ENCODE measurements at regions of chr14 and their contacts with region 1.

Region 1: DNA sequence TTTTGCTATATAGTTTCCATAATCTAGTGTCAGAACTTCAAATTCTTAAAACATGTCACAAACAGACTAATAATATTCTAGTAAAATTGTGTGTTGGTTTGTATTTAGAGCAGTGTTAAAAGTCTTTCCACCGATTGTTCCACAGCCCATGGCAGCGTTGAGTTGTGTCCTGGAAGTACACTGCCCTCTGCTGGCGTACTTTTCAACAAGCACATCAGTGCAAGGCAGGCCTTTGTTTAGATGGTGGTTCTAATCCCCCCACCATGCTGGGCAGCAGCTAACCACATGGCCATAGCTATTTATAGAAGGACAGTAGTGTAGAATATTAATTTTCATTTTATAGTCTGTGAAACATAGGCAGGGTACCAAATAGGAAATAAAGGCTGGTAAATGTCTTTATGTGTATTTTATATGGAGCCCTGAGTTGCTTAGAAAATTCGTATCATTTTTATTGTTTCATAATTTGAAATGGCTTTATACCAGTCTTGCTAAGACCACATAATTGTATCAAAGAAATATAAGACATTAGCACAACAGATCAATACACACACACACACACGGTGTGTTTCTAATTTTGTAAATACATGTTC is 235.4 kb downstream of the SEC23A start:
- DNase-seq: peak; percentile 10
- H3K4me3 Mint-ChIP-seq: no peak overlapping the region
- H3K27ac Mint-ChIP-seq: no peak overlapping the region
- H3K4me1 Mint-ChIP-seq: no peaks in the 10 kb centered on the region
- H3K27me3 Mint-ChIP-seq: peaks cover 3% of the 10 kb centered on the region

Region 2: DNA sequence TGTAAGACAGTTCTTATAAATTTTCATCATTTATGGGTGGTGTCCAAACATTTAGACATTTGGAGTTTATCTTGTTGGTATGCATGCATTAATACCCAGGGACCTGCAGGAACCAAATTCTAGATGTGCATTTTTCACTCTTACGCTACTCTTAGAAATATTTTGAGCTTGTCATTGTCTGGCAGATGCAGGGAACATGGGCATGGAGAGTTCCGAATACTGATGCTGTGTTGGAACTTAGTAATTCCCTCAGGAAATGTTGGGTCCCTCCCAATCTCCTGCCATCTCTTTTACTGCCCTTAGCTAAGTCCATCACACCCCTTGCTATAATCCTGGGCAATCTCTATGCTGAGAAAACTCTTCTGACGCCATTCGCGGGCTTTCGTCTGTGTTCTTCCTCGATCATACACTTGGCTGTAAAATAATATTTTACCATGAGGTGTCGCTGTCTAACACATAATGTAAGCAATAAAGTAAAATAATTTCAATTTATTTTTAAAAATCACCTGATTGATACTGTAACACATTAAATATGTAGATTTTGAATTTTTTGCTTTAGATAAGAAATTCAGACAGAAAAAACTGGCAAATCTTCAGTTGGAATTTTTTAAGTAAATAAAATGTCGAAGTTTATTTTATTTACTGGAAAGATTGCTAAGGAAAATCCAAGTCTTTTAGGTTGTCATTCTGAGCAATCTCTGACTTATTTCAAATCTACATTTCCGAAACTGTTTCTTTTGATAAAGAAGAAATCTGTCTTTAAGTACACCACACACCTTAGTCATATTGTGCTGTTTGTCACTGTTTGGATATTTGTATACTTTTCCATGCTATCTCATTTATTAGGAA is 964.1 kb before region 1 on chr14:
- intact Hi-C with region 1: loop called (anchors 2 kb)
- DNase-seq: no peak
- H3K4me3 Mint-ChIP-seq: no peak overlapping the region
- H3K27ac Mint-ChIP-seq: no peak overlapping the region
- H3K4me1 Mint-ChIP-seq: no peaks in the 10 kb centered on the region
- H3K27me3 Mint-ChIP-seq: peaks cover 9% of the 10 kb centered on the region

Region 3: DNA sequence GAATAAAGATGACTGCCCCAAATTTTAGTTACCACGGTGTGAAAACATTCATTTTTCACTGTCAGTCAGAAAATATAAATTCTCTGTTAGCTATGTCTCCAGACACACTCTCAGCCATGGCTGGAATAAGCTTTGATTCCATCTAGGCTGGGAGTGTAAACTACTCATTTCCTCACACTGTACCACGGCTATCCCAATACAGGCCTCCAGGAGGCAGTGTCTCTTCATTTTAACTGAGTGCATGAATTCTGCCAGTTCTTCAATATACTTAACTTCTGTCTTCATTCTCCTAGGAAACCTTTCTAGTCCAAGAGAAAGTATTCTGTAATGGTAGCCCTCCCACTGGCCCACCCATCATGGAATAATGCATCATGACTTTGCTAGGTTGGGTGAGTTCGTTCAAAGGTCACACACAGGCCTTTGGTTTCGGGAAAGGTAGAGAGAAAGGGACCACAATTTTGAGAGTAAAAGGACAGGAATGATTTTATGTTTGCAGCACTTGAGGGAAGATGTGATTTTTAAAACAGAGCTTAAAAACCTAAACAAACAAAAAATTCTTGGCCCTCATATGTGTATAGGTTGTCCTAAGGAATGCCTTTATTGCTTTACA is 145.7 kb before region 1 on chr14:
- intact Hi-C with region 1: loop called (anchors 1 kb)
- DNase-seq: peak; percentile 4
- H3K4me3 Mint-ChIP-seq: no peak overlapping the region
- H3K27ac Mint-ChIP-seq: no peak overlapping the region
- H3K4me1 Mint-ChIP-seq: no peaks in the 10 kb centered on the region
- H3K27me3 Mint-ChIP-seq: no peaks in the 10 kb centered on the region

Region 4: GRCh38 chr14:38799671-38800070 is 68.0 kb before region 1 on chr14:
- intact Hi-C with region 1: no loop called
- DNase-seq: no peak
- H3K4me3 Mint-ChIP-seq: no peak overlapping the region
- H3K27ac Mint-ChIP-seq: no peak overlapping the region
- H3K4me1 Mint-ChIP-seq: no peaks in the 10 kb centered on the region
- H3K27me3 Mint-ChIP-seq: no peaks in the 10 kb centered on the region

Region 5: GRCh38 chr14:39015360-39015961 is 147.8 kb after region 1 on chr14:
- intact Hi-C with region 1: loop called (anchors 5 kb)
- DNase-seq: no peak
- H3K4me3 Mint-ChIP-seq: no peak overlapping the region
- H3K27ac Mint-ChIP-seq: no peak overlapping the region
- H3K4me1 Mint-ChIP-seq: no peaks in the 10 kb centered on the region
- H3K27me3 Mint-ChIP-seq: no peaks in the 10 kb centered on the region

Measured in activated T-helper 1 cell treated with anti-CD3 and anti-CD28 coated beads, Interleukin-12 subunit alpha, Interleukin-12 subunit beta, Interleukin-2, Interleukin-4 antibody, amounts not matched to agents 30 ng/mL and 10 ng/mL and 1 ng/mL, durations not matched to agents 14 hours and 24 hours and 36 hours (primary cell).